Right ventricle myocardium inferior (tissue), 1 donor: ENCODE measurements at regions of chr20 and their contacts with region 1.

Region 1: DNA sequence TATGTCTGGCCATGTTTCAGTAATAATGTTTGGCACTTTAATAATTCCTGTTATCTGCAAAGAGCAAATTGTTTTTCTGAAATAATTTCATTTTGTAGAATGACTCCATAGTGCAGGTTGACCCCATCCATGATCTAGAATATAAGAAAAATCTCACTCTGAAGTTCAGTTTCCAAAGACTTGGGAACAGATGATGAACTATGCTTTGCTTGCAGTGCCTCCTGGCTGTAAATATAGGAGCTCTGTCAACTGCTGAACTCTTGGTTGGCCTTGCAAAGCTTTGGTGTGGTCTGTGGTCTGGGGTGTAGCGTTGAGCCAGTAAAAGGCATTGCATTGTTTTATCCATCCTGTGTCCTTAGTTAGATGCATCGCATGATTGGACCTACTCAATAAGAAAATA is 104.0 kb downstream of the PLCB4 start:
- DNase-seq: no peak
- ATAC-seq: peak; percentile 34

Region 2: DNA sequence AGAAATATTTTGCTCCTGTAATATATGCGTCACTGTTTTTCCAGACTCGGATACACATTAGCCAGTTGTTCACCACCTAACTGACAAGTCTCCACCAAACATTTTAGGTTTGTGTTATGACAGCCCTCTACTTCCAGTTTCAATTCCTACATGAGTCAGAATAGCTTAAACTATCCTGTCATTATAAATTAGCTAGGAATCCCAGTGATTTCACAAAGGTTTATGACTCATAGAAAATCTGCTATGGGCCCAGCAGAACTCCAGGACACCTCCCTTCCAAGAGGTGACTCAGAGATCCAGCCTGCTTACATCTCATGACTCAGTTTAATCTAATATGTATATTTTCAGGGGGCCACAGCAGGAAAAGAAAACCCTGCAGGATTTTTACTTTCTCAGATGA is 121.3 kb before region 1 on chr20:
- intact Hi-C with region 1: no loop called
- DNase-seq: no peak
- ATAC-seq: no peak

Region 3: DNA sequence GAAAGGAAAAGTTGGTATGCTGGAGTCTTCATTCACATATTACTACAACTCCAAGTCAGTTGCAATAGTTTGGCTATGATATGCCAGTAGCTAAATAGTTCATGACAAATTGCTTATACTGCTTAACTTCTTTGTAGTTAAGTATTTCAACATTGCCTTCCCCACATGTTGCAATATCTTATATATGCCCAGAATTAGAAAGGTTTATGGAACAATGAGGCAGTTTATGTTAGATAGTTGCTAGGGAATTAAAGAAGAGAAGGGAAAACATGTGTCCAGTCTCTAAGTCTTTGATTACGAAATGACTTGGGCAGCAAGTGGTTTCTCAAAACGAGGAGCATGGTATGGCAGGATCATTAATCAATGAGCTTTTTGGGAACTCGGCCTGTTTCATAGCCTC is 41.8 kb after region 1 on chr20:
- intact Hi-C with region 1: loop called (anchors 5 kb)
- DNase-seq: no peak
- ATAC-seq: peak; percentile 27